Endothelial cell of umbilical vein (primary cell): ENCODE measurements at regions of chr9 and their contacts with region 1.

Region 1: GRCh38 chr9:107749787-107750444 is 260.3 kb upstream of the KLF4 start:
- DNase-seq: peak; percentile 84
- H3K4me3 ChIP-seq: no peak overlapping the region
- H3K27ac ChIP-seq: peak overlapping the region; percentile 60
- H3K4me1 ChIP-seq: peaks cover 46% of the 10 kb centered on the region
- H3K27me3 ChIP-seq: no peaks in the 10 kb centered on the region
- CTCF ChIP-seq: no peak
- POLR2A ChIP-seq: peak; percentile 7

Region 2: GRCh38 chr9:107732781-107733522 is 17.0 kb before region 1 on chr9:
- CTCF ChIA-PET with region 1: interaction called, 7 read pairs
- POLR2A ChIA-PET with region 1: no interaction called
- dilution Hi-C with region 1: no loop called
- intact Hi-C with region 1: loop called (anchors 2 kb)
- DNase-seq: peak; percentile 71
- H3K4me3 ChIP-seq: peak overlapping the region in 1 of 3 experiments; percentile 5
- H3K27ac ChIP-seq: peak overlapping the region; percentile 20
- H3K4me1 ChIP-seq: peaks cover 15% of the 10 kb centered on the region
- H3K27me3 ChIP-seq: no peaks in the 10 kb centered on the region
- CTCF ChIP-seq: no peak
- POLR2A ChIP-seq: no peak

Region 3: GRCh38 chr9:107847978-107848964 is 98.4 kb after region 1 on chr9:
- CTCF ChIA-PET with region 1: no interaction called
- POLR2A ChIA-PET with region 1: no interaction called
- dilution Hi-C with region 1: no loop called
- intact Hi-C with region 1: no loop called
- DNase-seq: no peak
- H3K4me3 ChIP-seq: no peak overlapping the region
- H3K27ac ChIP-seq: no peak overlapping the region
- H3K4me1 ChIP-seq: no peaks in the 10 kb centered on the region
- H3K27me3 ChIP-seq: no peaks in the 10 kb centered on the region
- CTCF ChIP-seq: no peak
- POLR2A ChIP-seq: no peak